Aorta (tissue), 5 donors: ENCODE measurements at regions of chr13 and their contacts with region 1.

Region 1: GRCh38 chr13:75482070-75482819 is at the start of gene TBC1D4:
- DNase-seq: peak; percentile 91 to 92
- ATAC-seq: peak; percentile 91
- H3K4me3 ChIP-seq: peak within 1 kb of the TSS; percentile 42 to 65
- H3K27ac ChIP-seq: no peak within 1 kb of the TSS
- H3K4me1 ChIP-seq: no peaks in the 10 kb centered on the region
- H3K27me3 ChIP-seq: no peaks in the 10 kb centered on the region
- total RNA-seq, gene TBC1D4: 9.1 to 16.3 TPM

Region 2: DNA sequence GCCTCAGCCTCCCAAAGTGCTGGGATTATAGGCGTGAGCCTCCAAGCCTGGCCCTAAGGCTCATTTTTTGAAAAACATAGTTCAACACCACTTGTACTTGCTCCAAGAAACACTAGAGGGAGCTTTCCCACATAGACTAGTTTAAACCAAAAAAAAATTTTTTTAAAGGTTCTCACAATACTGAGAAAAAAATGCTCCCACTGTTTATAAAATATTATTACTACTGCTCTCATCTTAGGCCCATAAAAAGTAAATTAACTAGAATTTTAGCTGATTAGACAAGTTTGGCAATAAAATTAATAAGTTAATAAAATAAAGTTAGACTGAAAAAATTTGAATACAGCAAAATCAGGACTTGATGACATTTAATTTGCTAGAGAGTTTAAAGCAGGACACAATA is 109.7 kb before region 1 on chr13:
- intact Hi-C with region 1: loop called (anchors 2 to 5 kb)
- DNase-seq: no peak
- ATAC-seq: peak; percentile 82
- H3K4me3 ChIP-seq: no peak overlapping the region
- H3K27ac ChIP-seq: no peak overlapping the region
- H3K4me1 ChIP-seq: no peaks in the 10 kb centered on the region
- H3K27me3 ChIP-seq: no peaks in the 10 kb centered on the region

Region 3: DNA sequence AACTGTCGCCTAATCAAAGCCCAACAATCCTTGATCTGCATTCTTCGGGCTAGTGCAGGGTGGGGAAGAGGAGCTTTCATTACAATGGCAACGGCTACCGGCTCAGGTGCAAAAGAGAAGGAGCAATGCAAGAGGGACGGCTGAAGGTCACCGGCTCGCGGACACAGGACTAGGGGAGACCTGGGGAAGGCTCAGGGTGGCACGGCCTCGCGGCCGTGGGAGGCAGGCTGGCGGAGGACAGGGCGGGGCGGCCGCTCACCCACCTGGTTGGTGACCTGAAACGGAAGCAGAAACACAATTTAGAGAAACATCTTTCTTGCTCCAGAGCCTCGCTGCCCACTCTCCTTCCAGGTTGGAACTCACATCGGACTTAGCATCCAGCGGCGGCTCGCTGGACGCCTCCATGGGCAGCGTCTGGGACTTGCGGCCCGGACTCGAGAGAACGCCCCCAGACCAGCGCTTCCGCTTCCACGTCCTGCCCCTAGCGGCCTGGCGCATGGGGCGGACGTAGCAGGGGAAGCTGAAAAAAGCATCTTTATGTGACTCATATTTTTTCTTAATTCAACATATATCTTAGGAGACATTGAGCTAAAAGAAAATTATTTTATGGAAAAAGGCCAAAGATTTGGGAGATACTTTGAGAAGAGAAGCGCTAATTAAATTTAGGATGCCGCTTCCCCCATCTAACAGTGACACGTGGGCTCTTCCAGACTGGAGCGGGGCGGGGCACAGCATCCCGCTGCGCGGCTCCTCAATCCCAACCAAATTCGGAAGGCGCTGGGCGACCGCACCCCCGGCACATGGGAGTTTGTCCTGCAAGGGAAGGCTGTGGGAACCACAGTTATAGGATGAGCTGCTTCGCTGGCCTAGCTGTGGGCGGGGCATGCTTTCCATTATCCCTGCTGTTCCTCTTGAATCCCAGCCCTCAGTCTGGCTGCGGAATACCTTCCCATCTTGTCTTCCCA is 55.4 kb after region 1 on chr13 and contains the start of gene COMMD6:
- intact Hi-C with region 1: loop called (anchors 5 kb)
- DNase-seq: peak; percentile 87 to 93
- ATAC-seq: peak; percentile 96
- H3K4me3 ChIP-seq: peak within 1 kb of the TSS; percentile 73 to 78
- H3K27ac ChIP-seq: peak within 1 kb of the TSS in 1 of 2 donors; percentile 8
- H3K4me1 ChIP-seq: no peaks in the 10 kb centered on the region
- H3K27me3 ChIP-seq: no peaks in the 10 kb centered on the region
- total RNA-seq, gene COMMD6: 142 to 154 TPM